Dendritic cell treated with granulocyte-macrophage colony-stimulating factor and Interleukin-4, amounts not matched to agents 40 ng/mL and 50 ng/mL, for 4 days (primary cell): ENCODE measurements at regions of chr10 and their contacts with region 1.

Region 1: GRCh38 chr10:117342641-117343040 is 32.6 kb downstream of the PDZD8 start:
- H3K4me3 Mint-ChIP-seq: no peak overlapping the region
- H3K27ac Mint-ChIP-seq: peak overlapping the region; percentile 71
- H3K4me1 Mint-ChIP-seq: peaks cover 52% of the 10 kb centered on the region
- H3K27me3 Mint-ChIP-seq: no peaks in the 10 kb centered on the region

Region 2: GRCh38 chr10:117375360-117376178 is 32.9 kb after region 1 on chr10 and contains the start of gene PDZD8:
- intact Hi-C with region 1: loop called (anchors 5 kb)
- H3K4me3 Mint-ChIP-seq: peak within 1 kb of the TSS; percentile 95
- H3K27ac Mint-ChIP-seq: peak within 1 kb of the TSS; percentile 92
- H3K4me1 Mint-ChIP-seq: peaks cover 40% of the 10 kb centered on the region
- H3K27me3 Mint-ChIP-seq: peaks cover 9% of the 10 kb centered on the region